Transverse colon (tissue), 4 donors: ENCODE measurements at regions of chr7 and their contacts with region 1.

Region 1: GRCh38 chr7:47095946-47096345 is 486.0 kb downstream of the TNS3 start:
- DNase-seq: no peak
- H3K4me3 ChIP-seq: no peak overlapping the region
- H3K27ac ChIP-seq: no peak overlapping the region
- H3K4me1 ChIP-seq: no peaks in the 10 kb centered on the region
- H3K27me3 ChIP-seq: no peaks in the 10 kb centered on the region
- CTCF ChIP-seq: no peak
- EP300 ChIP-seq: no peak
- POLR2A ChIP-seq: no peak

Region 2: DNA sequence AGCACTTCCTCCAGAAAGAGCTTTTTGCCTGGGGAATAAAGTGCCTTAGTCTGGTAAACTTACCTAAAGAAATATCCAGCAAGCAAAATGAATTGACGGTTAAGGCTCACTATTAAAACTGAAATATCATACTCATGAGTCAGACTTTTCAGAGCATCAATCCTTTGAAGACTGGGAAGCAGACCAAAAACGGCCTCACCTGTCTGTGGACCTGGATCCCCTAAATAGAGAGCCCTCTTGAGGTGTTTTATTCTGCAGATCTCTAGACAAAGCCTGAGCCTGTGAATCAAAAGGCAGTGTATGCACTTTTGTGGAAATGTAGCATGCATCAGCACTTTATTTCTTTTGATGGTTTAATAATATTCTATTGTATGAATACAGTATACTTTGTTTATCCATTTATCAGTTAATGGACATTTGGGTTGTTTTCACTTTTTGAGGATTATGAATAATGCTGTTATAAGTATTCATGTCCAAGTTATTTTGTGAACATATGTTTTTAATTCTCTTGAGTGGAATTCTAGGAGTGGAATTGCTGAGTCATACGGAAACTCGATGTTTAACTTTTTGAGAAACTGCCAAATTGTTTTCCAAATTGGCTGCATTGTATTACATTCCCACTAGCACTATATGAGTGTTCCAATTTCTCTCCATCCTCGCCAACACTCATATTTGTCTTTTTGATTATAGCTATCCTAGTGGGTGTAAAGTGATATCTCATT is 725.9 kb before region 1 on chr7:
- in situ Hi-C with region 1: no loop called
- intact Hi-C with region 1: no loop called
- DNase-seq: no peak
- H3K4me3 ChIP-seq: no peak overlapping the region
- H3K27ac ChIP-seq: no peak overlapping the region
- H3K4me1 ChIP-seq: no peaks in the 10 kb centered on the region
- H3K27me3 ChIP-seq: no peaks in the 10 kb centered on the region
- CTCF ChIP-seq: no peak
- EP300 ChIP-seq: no peak
- POLR2A ChIP-seq: no peak

Region 3: GRCh38 chr7:48316768-48317167 is 1220.8 kb after region 1 on chr7:
- in situ Hi-C with region 1: no loop called
- intact Hi-C with region 1: loop called (anchors 5 kb)
- DNase-seq: no peak
- H3K4me3 ChIP-seq: no peak overlapping the region
- H3K27ac ChIP-seq: no peak overlapping the region
- H3K4me1 ChIP-seq: no peaks in the 10 kb centered on the region
- H3K27me3 ChIP-seq: no peaks in the 10 kb centered on the region
- CTCF ChIP-seq: no peak
- EP300 ChIP-seq: no peak
- POLR2A ChIP-seq: no peak